Transverse colon (tissue), 4 donors: ENCODE measurements at regions of chr7 and their contacts with region 1.

Region 1: DNA sequence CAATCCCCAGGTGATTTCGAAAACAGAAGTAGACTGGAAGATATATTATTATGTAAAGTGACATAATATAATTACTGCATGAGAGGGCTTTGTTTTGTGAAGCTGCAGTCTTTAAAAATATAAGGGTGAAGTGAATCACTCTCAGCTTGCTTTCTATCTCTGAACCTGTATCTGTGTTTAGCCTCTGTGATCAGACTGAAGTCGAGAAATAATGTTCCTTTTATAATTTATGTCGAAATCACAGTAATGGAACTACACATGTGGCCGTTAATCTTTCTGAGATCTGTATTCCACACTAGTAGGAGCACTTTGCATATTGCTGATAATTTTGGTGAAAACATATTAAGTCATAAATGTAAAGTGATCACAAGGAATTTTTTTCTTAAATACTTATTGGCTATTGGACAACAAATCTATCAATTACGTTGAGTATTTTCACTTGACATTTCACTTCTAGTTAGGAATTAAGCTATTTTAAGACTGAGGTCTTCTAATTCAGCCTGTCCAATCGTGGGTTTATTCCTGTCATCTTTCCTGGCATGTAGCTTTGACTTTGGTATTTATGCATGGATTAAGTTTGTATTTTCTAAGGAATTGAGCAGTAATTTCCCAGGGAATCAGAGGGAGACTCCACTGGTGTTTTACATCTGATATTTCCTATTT is 268.2 kb upstream of the POT1 start:
- DNase-seq: no peak
- H3K4me3 ChIP-seq: no peak overlapping the region
- H3K27ac ChIP-seq: no peak overlapping the region
- H3K4me1 ChIP-seq: no peaks in the 10 kb centered on the region
- H3K27me3 ChIP-seq: no peaks in the 10 kb centered on the region
- CTCF ChIP-seq: no peak
- EP300 ChIP-seq: no peak
- POLR2A ChIP-seq: no peak

Region 2: DNA sequence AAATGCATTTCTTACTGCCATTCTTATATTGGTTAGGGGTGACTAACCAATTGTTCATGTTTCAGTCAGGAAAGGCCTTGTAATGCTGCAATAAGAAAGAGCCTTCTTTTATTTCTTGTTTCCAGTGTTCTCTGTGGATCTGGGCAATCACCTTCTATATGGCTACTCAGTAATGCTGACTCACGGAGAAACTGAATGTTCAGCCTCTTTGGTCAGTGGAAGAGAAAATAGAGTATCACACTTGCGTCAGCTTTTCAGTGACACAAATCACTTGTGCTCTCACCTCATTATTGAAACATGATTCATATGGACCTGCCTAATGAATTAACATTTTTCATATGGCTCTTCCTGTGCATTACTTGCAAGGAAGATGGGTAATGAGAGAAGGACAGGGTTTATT is 24.3 kb before region 1 on chr7:
- in situ Hi-C with region 1: no loop called
- intact Hi-C with region 1: no loop called
- DNase-seq: no peak
- H3K4me3 ChIP-seq: no peak overlapping the region
- H3K27ac ChIP-seq: no peak overlapping the region
- H3K4me1 ChIP-seq: no peaks in the 10 kb centered on the region
- H3K27me3 ChIP-seq: no peaks in the 10 kb centered on the region
- CTCF ChIP-seq: no peak
- EP300 ChIP-seq: no peak
- POLR2A ChIP-seq: no peak

Region 3: DNA sequence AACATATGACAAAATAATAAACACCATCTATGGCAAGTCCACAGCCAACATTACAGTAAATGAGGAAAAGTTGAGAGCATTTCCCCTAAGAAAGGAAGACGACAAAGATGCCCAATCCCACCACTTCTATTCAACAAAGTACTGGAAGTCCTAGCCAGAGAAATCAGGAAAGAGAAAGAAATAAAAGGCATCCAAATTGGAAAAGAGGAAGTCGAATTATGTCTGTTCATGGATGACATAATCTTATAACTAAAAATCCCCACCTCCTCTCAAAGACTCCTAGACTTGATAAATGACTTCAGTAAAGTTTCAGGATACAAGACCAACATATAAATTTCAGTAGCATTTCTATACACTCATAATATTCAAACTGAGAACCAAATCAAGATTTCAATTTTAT is 20.2 kb after region 1 on chr7:
- in situ Hi-C with region 1: no loop called
- intact Hi-C with region 1: loop called (anchors 2 kb)
- DNase-seq: no peak
- H3K4me3 ChIP-seq: no peak overlapping the region
- H3K27ac ChIP-seq: no peak overlapping the region
- H3K4me1 ChIP-seq: no peaks in the 10 kb centered on the region
- H3K27me3 ChIP-seq: no peaks in the 10 kb centered on the region
- CTCF ChIP-seq: no peak
- EP300 ChIP-seq: no peak
- POLR2A ChIP-seq: no peak

Region 4: DNA sequence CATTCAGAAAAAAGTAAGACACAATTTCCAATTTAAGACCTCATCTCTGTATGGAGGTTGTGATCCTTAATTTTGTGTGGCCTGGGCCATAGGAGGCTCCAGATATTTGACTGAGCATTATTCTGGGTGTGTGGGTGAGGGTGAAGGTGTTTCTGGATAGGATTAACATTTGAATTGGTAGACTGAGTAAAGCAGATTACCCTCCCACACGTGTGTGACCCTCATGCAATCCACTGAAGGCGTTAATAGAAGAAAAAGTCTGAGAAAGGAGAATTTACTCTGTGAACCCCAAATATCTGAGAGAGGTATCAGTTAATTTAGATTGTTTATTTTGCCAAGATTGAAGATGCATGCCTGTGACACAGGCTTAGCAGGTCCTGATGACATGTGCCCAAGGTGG is 59.8 kb after region 1 on chr7:
- in situ Hi-C with region 1: no loop called
- intact Hi-C with region 1: no loop called
- DNase-seq: no peak
- H3K4me3 ChIP-seq: no peak overlapping the region
- H3K27ac ChIP-seq: no peak overlapping the region
- H3K4me1 ChIP-seq: no peaks in the 10 kb centered on the region
- H3K27me3 ChIP-seq: no peaks in the 10 kb centered on the region
- CTCF ChIP-seq: no peak
- EP300 ChIP-seq: no peak
- POLR2A ChIP-seq: no peak